Activated T-helper 1 cell treated with anti-CD3 and anti-CD28 coated beads, Interleukin-12 subunit alpha, Interleukin-12 subunit beta, Interleukin-2, Interleukin-4 antibody, amounts not matched to agents 30 ng/mL and 10 ng/mL and 1 ng/mL, durations not matched to agents 14 hours and 24 hours and 36 hours (primary cell): ENCODE measurements at regions of chr12 and their contacts with region 1.

Region 1: DNA sequence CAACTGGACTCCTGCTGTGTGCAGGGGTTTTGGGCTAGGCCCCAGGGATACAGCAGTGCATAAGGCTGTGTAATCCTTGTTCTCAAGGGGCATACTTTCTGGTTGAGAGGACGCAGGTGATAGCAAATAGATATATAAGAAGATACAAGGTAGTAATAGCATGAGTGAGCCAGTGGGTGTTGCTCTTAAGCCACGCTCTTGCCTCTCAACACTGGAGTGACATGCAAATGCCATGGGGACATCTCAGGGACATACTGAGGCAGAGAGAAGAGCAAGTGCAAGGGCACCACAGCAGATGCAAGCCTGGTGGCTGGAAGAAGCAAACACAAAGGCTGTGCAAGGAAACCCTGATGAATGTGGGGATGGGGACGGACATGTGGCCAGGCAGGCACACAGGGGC is 223.3 kb downstream of the CHST11 start:
- DNase-seq: no peak
- H3K4me3 Mint-ChIP-seq: no peak overlapping the region
- H3K27ac Mint-ChIP-seq: peak overlapping the region; percentile 85
- H3K4me1 Mint-ChIP-seq: peaks cover 84% of the 10 kb centered on the region
- H3K27me3 Mint-ChIP-seq: no peaks in the 10 kb centered on the region

Region 2: DNA sequence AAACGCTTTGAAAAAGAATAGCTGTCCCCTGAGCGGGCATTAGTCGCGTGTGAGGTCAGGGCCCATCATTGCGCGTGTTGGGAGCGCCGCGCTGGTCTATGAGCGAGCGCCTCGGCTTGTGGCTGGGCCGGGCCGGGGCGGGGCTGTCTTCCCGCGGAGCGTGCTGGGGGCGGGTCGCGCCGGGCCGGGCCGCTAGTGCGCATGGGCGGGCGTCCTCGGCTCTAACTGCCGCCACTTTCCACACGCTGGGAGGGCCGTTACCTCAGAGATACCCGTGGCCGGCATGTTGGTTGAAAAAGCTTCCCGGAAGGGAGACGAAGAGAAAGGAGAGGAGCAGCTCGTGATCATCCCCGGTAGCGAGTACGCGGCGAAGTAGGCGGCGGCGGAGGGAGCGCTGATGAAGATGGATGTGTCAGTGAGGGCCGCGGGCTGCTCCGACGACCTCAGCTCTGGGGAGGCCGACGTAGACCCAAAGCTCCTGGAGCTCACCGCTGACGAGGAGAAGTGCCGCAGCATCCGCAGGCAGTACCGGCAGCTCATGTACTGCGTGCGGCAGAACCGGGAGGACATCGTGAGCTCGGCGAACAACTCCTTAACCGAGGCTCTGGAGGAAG is 376.4 kb before region 1 on chr12 and contains the start of gene EID3:
- intact Hi-C with region 1: loop called (anchors 5 kb)
- DNase-seq: peak; percentile 92
- H3K4me3 Mint-ChIP-seq: peak within 1 kb of the TSS; percentile 93
- H3K27ac Mint-ChIP-seq: peak within 1 kb of the TSS; percentile 99
- H3K4me1 Mint-ChIP-seq: peaks cover 66% of the 10 kb centered on the region
- H3K27me3 Mint-ChIP-seq: no peaks in the 10 kb centered on the region
- total RNA-seq, gene EID3: 10.5 and 10.6 TPM in 2 replicates

Region 3: GRCh38 chr12:104720339-104721038 is 40.4 kb after region 1 on chr12:
- intact Hi-C with region 1: loop called (anchors 1 kb)
- DNase-seq: peak; percentile 69
- H3K4me3 Mint-ChIP-seq: peak overlapping the region; percentile 81
- H3K27ac Mint-ChIP-seq: peak overlapping the region; percentile 94
- H3K4me1 Mint-ChIP-seq: peaks cover 78% of the 10 kb centered on the region
- H3K27me3 Mint-ChIP-seq: no peaks in the 10 kb centered on the region

Region 4: GRCh38 chr12:104877123-104877705 is 197.1 kb after region 1 on chr12:
- intact Hi-C with region 1: loop called (anchors 2 kb)
- DNase-seq: no peak
- H3K4me3 Mint-ChIP-seq: no peak overlapping the region
- H3K27ac Mint-ChIP-seq: no peak overlapping the region
- H3K4me1 Mint-ChIP-seq: peaks cover 21% of the 10 kb centered on the region
- H3K27me3 Mint-ChIP-seq: peaks cover 2% of the 10 kb centered on the region

Region 5: GRCh38 chr12:104986022-104986941 is 306.2 kb after region 1 on chr12 and contains the start of gene NOPCHAP1:
- intact Hi-C with region 1: loop called (anchors 5 kb)
- DNase-seq: peak; percentile 83
- H3K4me3 Mint-ChIP-seq: peak within 1 kb of the TSS; percentile 89
- H3K27ac Mint-ChIP-seq: peak within 1 kb of the TSS; percentile 57
- H3K4me1 Mint-ChIP-seq: peaks cover 44% of the 10 kb centered on the region
- H3K27me3 Mint-ChIP-seq: peaks cover 3% of the 10 kb centered on the region
- total RNA-seq, gene NOPCHAP1: 28.0 and 40.0 TPM in 2 replicates

Region 6: GRCh38 chr12:105100998-105101397 is 420.9 kb after region 1 on chr12:
- intact Hi-C with region 1: no loop called
- DNase-seq: no peak
- H3K4me3 Mint-ChIP-seq: no peak overlapping the region
- H3K27ac Mint-ChIP-seq: no peak overlapping the region
- H3K4me1 Mint-ChIP-seq: no peaks in the 10 kb centered on the region
- H3K27me3 Mint-ChIP-seq: peaks cover 47% of the 10 kb centered on the region